Activated CD8-positive, alpha-beta T cell treated with anti-CD3 and anti-CD28 coated beads for 36 hours (primary cell): ENCODE measurements at regions of chr17 and their contacts with region 1.

Region 1: GRCh38 chr17:30336369-30337171 is 2.7 kb upstream of the TMIGD1 start:
- DNase-seq: peak; percentile 70
- ATAC-seq: peak; percentile 26
- H3K4me3 Mint-ChIP-seq: no peak overlapping the region
- H3K27ac Mint-ChIP-seq: peak overlapping the region; percentile 12
- H3K4me1 Mint-ChIP-seq: peaks cover 36% of the 10 kb centered on the region
- H3K27me3 Mint-ChIP-seq: no peaks in the 10 kb centered on the region
- CTCF ChIP-seq: peak; percentile 99

Region 2: GRCh38 chr17:30124273-30124796 is 212.2 kb before region 1 on chr17:
- CTCF ChIA-PET with region 1: interaction called, 101 read pairs
- POLR2A ChIA-PET with region 1: interaction called, 3 read pairs
- intact Hi-C with region 1: loop called (anchors 5 kb)
- DNase-seq: no peak
- ATAC-seq: no peak
- H3K4me3 Mint-ChIP-seq: no peak overlapping the region
- H3K27ac Mint-ChIP-seq: no peak overlapping the region
- H3K4me1 Mint-ChIP-seq: peaks cover 41% of the 10 kb centered on the region
- H3K27me3 Mint-ChIP-seq: no peaks in the 10 kb centered on the region
- CTCF ChIP-seq: no peak

Region 3: GRCh38 chr17:30291543-30292285 is 44.9 kb before region 1 on chr17 and contains the start of gene BLMH:
- CTCF ChIA-PET with region 1: interaction called, 43 read pairs
- POLR2A ChIA-PET with region 1: interaction called, 34 read pairs
- intact Hi-C with region 1: loop called (anchors 1 kb)
- DNase-seq: peak; percentile 86
- ATAC-seq: peak; percentile 92
- H3K4me3 Mint-ChIP-seq: peak within 1 kb of the TSS; percentile 94
- H3K27ac Mint-ChIP-seq: peak within 1 kb of the TSS; percentile 91
- H3K4me1 Mint-ChIP-seq: peaks cover 18% of the 10 kb centered on the region
- H3K27me3 Mint-ChIP-seq: no peaks in the 10 kb centered on the region
- CTCF ChIP-seq: no peak
- total RNA-seq, gene BLMH: 75.9 to 78.6 TPM

Region 4: DNA sequence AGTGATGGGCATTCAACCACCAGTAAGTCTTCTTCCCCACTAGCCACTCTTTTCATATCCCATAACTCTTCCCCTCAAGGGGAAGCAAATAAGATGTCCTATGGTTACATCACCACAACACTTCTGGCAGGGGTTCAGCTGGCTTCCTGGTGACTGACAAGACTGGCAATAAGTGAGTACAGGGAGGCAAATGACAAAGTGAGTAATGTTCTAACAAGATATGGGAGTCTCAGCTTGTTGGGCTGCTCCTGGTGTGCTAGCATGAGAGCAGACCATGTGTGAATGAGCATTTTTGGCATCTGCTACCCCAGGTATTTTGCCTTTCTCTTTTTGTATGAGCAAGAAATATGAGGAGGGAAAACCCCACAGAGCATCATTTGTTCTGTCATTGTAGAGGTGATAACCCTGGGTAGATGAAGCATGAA is 12.7 kb before region 1 on chr17:
- CTCF ChIA-PET with region 1: interaction called, 35 read pairs
- POLR2A ChIA-PET with region 1: interaction called, 3 read pairs
- intact Hi-C with region 1: no loop called
- DNase-seq: peak; percentile 59
- ATAC-seq: peak; percentile 92
- H3K4me3 Mint-ChIP-seq: no peak overlapping the region
- H3K27ac Mint-ChIP-seq: peak overlapping the region; percentile 56
- H3K4me1 Mint-ChIP-seq: peaks cover 24% of the 10 kb centered on the region
- H3K27me3 Mint-ChIP-seq: no peaks in the 10 kb centered on the region
- CTCF ChIP-seq: no peak